ENCODE measurements at regions of chr18 and their contacts with region 1.

Region 1: DNA sequence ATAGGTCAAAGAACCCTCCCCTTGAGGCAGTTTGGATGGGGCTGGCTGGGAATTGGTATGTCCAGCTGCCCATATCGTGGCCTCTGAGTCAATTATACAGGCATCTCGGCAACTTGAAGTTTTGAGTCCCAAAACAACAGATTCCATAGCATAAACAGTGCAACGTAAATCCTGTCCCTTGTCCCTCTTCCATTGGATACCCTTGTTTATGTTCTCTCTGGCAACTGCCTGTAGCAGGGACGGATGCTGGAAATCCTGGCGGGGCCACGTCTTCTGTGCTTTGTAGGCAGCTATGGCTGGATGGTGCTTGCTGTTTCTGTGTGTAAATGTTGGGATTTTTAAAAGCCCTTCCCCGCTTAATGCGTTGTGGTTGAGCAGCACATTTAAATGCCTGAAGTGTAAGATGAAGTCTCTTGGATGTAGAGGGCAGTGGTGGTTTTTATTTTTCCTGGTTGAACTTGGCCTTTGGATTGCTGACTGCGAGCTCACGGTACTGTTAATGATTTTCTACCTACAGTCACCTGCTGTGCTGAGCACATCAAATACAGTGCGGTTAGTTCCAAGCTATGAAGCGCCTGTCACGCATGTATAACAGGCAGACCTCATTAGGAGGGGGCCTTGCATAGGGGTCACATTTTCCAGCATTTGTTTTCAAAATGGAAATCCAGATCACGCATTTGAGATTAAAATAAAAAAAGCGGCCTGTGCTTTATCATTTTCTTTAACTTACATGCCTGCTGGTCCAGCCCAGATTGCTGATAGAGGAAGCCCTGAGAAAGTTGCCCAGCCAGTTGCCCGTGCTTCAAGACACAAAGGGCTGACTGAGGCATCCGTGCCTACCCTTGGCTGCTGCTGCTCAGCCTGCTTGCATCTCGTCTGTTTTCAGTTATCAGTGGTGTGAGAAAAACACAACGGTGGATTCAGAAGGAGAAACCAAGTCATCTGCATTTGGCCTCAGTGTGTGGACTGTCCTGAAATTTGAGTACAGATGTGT is 84.7 kb downstream of the NEDD4L start:
- DNase-seq: no peak
- ATAC-seq: no peak

Region 2: GRCh38 chr18:57881818-57882413 is 246.8 kb before region 1 on chr18:
- intact Hi-C with region 1: loop called (anchors 10 kb)
- DNase-seq: peak; percentile 55
- ATAC-seq: peak; percentile 88

Region 3: DNA sequence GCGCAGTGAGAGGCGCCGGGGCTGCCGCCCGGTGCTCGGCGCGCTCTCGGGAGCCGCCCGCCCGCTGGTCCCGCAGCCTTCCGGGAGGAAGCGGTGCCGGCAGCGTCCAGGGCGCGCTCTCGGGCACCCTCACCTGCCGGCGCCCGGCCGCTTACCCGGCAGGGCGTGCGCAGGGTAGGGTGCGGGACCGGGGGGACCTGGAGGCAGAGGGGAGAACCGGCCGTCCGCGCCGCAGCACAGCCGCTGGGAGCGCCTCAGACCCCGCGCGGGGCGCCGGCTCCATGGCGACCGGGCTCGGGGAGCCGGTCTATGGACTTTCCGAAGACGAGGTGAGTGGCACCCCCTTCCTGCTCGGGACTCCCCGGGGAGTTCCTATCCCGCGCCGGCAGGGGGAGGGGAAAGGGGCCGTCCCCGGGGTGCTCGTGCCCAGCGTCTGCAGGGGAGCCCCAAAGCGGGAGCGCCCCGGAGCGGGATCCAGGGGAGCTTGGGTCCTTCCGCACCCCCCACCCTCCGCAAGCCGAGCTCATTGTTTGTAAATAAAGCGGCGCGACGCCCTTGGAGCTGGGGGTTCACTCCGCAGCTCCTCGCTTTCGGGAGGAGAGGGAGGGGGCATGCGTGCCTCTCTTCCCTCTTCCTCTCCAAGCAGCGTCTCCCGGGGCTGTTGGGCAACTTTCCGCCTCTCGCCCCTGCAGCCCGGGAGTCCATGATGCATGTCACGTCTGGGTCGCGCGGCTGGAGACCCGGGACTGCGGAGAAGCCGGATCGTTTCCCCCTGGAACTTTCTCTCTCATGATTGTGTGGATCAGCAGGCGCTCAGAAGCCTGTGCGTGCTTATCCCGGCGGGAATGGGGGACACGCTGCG is 84.1 kb before region 1 on chr18:
- intact Hi-C with region 1: loop called (anchors 5 kb)
- DNase-seq: peak; percentile 50
- ATAC-seq: peak; percentile 30

Measured in left ventricle myocardium superior (tissue), 1 donor.